MCF 10A (cell line): ENCODE measurements at regions of chr1 and their contacts with region 1.

Region 1: GRCh38 chr1:39901698-39902459 is at the start of gene MYCL:
- DNase-seq: peak; percentile 79
- H3K4me3 Mint-ChIP-seq: peak within 1 kb of the TSS; percentile 68
- H3K27ac Mint-ChIP-seq: no peak within 1 kb of the TSS
- H3K4me1 Mint-ChIP-seq: no peaks in the 10 kb centered on the region
- H3K27me3 Mint-ChIP-seq: peaks cover 14% of the 10 kb centered on the region
- CTCF ChIP-seq: peak; percentile 68
- total RNA-seq, gene MYCL: 0.63 and 1.1 TPM in 2 replicates

Region 2: GRCh38 chr1:39408641-39409054 is 493.2 kb before region 1 on chr1:
- CTCF ChIA-PET with region 1: no interaction called
- POLR2A ChIA-PET with region 1: no interaction called
- intact Hi-C with region 1: no loop called
- DNase-seq: peak; percentile 93
- H3K4me3 Mint-ChIP-seq: peak overlapping the region; percentile 83
- H3K27ac Mint-ChIP-seq: peak overlapping the region; percentile 71
- H3K4me1 Mint-ChIP-seq: peaks cover 55% of the 10 kb centered on the region
- H3K27me3 Mint-ChIP-seq: no peaks in the 10 kb centered on the region
- CTCF ChIP-seq: no peak

Region 3: DNA sequence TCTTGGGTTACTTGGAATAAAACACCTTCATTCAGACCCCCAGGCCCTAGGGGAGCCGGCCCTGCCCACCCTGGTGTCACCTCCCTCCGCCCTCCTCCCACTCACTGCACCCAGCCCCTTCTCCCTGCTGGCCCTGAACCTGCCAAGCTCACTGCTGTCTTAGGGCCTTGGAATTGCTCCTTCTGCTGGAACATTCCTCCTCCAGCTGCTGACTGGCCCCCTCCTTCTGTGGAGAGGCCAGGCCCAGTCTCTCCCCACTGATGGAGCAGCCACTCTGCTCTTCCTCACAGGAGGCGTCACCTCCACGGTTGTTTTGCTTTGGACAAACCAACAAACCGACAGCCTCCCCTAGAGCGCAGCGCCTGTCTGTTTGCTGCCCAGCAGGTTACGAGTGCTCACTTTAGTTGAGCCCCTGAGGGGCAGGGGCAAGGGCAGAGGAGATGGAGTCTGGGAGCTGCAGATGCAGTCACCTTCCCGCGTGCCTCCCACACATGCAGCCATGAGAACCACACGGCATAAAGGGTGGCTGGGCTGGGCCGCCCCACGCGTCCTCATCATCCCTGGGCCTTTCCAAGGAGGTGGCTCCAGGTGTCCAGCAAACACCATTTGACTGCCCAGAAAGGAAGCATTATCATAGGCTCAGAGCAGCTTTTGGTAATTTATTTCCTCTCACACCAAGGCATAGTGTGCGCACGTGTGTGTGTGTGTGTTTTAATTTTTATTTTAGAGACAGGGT is 140.2 kb before region 1 on chr1:
- CTCF ChIA-PET with region 1: no interaction called
- POLR2A ChIA-PET with region 1: no interaction called
- intact Hi-C with region 1: no loop called
- DNase-seq: no peak
- H3K4me3 Mint-ChIP-seq: no peak overlapping the region
- H3K27ac Mint-ChIP-seq: no peak overlapping the region
- H3K4me1 Mint-ChIP-seq: no peaks in the 10 kb centered on the region
- H3K27me3 Mint-ChIP-seq: no peaks in the 10 kb centered on the region
- CTCF ChIP-seq: no peak

Region 4: GRCh38 chr1:39816415-39817090 is 85.3 kb before region 1 on chr1:
- CTCF ChIA-PET with region 1: interaction called, 48 read pairs
- POLR2A ChIA-PET with region 1: interaction called, 5 read pairs
- intact Hi-C with region 1: loop called (anchors 1 kb)
- DNase-seq: peak; percentile 72
- H3K4me3 Mint-ChIP-seq: no peak overlapping the region
- H3K27ac Mint-ChIP-seq: no peak overlapping the region
- H3K4me1 Mint-ChIP-seq: peaks cover 9% of the 10 kb centered on the region
- H3K27me3 Mint-ChIP-seq: no peaks in the 10 kb centered on the region
- CTCF ChIP-seq: peak; percentile 58

Region 5: DNA sequence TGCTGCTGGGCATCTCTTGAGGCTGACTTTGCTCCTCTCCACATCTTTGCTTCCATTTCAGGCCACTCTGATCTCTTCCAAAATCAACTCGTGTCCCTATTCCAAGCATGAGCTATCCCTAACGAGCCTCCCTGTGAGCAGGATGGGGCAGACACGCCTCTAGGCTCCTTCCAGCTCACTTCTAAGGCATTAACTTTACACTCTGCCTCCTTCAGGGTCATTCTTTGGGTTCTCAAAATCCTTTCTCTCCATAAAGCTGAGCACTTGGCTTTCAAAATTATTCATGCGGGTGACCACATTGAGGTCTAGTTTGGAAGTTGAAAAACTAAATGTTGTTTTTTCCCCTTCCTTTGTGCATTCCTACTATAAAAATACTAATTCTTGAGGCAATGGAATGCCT is 79.8 kb before region 1 on chr1:
- CTCF ChIA-PET with region 1: interaction called, 48 read pairs
- POLR2A ChIA-PET with region 1: interaction called, 3 read pairs
- intact Hi-C with region 1: no loop called
- DNase-seq: no peak
- H3K4me3 Mint-ChIP-seq: no peak overlapping the region
- H3K27ac Mint-ChIP-seq: no peak overlapping the region
- H3K4me1 Mint-ChIP-seq: peaks cover 9% of the 10 kb centered on the region
- H3K27me3 Mint-ChIP-seq: no peaks in the 10 kb centered on the region
- CTCF ChIP-seq: no peak

Region 6: DNA sequence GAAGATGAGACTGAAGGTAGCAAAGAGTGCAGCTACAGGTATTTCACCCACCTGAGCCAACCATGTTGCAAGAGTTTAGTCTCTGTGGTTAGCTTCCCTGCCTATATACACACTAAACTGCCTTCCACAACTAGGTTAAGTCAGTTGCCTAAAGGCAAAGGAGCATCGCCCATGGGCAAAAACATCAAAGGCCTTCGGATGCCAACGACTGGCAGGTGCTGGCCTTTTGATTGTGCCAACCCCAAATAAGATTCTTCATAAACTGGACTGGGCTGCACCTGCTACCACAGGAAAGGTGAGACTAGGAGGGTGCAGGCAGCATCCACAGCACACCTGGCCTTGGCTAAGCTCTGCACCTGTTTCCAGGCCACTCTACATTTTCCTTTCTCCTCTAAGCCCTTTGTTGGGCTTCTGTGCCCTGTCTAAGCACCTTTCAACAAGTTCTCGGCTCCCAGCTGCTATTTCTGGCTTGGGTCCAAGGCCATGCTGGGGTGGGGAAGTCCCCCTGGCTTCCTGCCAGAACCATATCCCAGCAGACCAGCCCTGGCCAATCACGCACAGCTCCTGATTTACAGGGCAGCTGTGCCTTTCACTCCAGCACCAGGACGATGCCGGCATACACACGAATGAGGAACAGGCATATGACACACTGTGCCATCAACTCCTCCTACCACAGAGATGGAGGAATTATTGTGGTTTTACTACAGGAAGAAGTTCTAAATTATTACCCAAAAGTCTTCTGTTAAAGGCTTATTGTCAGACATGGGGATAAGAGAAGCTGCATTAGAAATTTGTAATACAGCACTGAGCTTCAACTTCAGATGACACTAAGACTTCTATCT is 56.4 kb before region 1 on chr1:
- CTCF ChIA-PET with region 1: interaction called, 20 read pairs
- POLR2A ChIA-PET with region 1: interaction called, 7 read pairs
- intact Hi-C with region 1: loop called (anchors 5 kb)
- DNase-seq: peak; percentile 89
- H3K4me3 Mint-ChIP-seq: no peak overlapping the region
- H3K27ac Mint-ChIP-seq: no peak overlapping the region
- H3K4me1 Mint-ChIP-seq: peaks cover 14% of the 10 kb centered on the region
- H3K27me3 Mint-ChIP-seq: no peaks in the 10 kb centered on the region
- CTCF ChIP-seq: no peak

Region 7: DNA sequence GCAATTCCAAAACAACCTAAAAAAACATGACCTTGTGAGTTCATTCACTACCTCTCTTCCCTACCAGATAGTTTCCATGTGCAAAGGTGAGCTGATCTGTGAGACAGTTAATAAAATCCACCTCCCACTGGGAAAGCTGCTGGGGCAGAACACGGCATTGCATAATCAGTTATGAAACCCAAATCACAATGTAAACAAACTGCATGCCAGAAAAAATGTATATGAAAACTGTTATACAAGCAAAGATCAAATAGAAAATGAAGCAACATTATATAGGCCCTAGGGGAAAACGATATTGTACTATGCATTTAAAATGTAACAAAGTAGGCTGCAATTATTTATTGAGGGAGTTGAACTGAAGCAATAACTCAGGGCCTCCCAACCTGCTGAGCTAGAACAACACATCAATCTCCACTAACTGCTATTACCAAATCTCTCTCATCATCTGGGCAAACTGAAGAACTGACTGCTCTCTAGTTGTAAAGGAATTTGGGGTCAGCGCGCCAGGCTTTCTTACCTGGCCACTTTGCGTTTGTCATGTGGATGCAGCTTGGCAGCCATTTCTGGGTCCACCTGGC is 49.6 kb before region 1 on chr1:
- CTCF ChIA-PET with region 1: interaction called, 20 read pairs
- POLR2A ChIA-PET with region 1: interaction called, 21 read pairs
- intact Hi-C with region 1: loop called (anchors 5 kb)
- DNase-seq: peak; percentile 90
- H3K4me3 Mint-ChIP-seq: no peak overlapping the region
- H3K27ac Mint-ChIP-seq: no peak overlapping the region
- H3K4me1 Mint-ChIP-seq: peaks cover 11% of the 10 kb centered on the region
- H3K27me3 Mint-ChIP-seq: no peaks in the 10 kb centered on the region
- CTCF ChIP-seq: no peak

Region 8: GRCh38 chr1:39882152-39882551 is 19.7 kb before region 1 on chr1:
- CTCF ChIA-PET with region 1: interaction called, 12 read pairs
- POLR2A ChIA-PET with region 1: interaction called, 47 read pairs
- intact Hi-C with region 1: no loop called
- DNase-seq: no peak
- H3K4me3 Mint-ChIP-seq: peak overlapping the region; percentile 82
- H3K27ac Mint-ChIP-seq: peak overlapping the region; percentile 78
- H3K4me1 Mint-ChIP-seq: peaks cover 28% of the 10 kb centered on the region
- H3K27me3 Mint-ChIP-seq: no peaks in the 10 kb centered on the region
- CTCF ChIP-seq: no peak

Region 9: GRCh38 chr1:39940252-39940651 is 38.4 kb after region 1 on chr1:
- CTCF ChIA-PET with region 1: no interaction called
- POLR2A ChIA-PET with region 1: no interaction called
- intact Hi-C with region 1: no loop called
- DNase-seq: no peak
- H3K4me3 Mint-ChIP-seq: no peak overlapping the region
- H3K27ac Mint-ChIP-seq: no peak overlapping the region
- H3K4me1 Mint-ChIP-seq: peaks cover 27% of the 10 kb centered on the region
- H3K27me3 Mint-ChIP-seq: no peaks in the 10 kb centered on the region
- CTCF ChIP-seq: no peak